PC-9 (cell line): ENCODE measurements at regions of chr6 and their contacts with region 1.

Region 1: DNA sequence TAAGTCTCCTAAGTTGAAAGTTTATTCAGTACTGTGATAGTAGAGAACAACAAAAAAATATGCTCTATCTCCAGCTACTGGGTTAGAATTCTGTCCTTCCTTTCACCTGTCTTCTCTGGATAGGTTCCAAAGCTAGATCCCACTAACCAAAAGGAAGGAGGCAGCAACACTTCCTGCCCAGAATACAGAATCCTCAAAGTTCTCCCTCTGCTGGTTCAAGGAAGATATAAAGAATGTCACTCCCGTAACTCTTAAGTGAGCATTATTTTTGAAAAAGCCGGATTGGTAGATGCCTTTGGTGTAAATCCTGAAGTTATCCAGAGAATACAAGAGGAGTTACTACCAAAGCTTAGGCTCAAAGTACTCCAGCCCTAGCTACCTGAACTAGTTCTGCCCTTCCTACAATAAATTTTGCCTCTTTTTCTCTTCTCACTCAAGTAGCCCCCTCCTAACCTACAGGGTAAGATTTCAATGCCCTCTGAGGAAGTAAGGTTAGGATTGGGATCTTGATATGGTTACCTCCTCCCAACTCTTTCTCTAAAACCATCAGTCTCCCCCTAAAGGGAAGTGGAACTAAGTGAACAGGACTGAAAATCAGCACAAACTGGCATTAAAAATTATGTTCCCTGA is 26.0 kb upstream of the CRIP3 start:
- DNase-seq: peak; percentile 12 to 60
- H3K4me3 ChIP-seq: no peak overlapping the region
- H3K27ac ChIP-seq: no peak overlapping the region
- H3K4me1 ChIP-seq: no peaks in the 10 kb centered on the region
- H3K27me3 ChIP-seq: no peaks in the 10 kb centered on the region
- CTCF ChIP-seq: peak; percentile 74

Region 2: DNA sequence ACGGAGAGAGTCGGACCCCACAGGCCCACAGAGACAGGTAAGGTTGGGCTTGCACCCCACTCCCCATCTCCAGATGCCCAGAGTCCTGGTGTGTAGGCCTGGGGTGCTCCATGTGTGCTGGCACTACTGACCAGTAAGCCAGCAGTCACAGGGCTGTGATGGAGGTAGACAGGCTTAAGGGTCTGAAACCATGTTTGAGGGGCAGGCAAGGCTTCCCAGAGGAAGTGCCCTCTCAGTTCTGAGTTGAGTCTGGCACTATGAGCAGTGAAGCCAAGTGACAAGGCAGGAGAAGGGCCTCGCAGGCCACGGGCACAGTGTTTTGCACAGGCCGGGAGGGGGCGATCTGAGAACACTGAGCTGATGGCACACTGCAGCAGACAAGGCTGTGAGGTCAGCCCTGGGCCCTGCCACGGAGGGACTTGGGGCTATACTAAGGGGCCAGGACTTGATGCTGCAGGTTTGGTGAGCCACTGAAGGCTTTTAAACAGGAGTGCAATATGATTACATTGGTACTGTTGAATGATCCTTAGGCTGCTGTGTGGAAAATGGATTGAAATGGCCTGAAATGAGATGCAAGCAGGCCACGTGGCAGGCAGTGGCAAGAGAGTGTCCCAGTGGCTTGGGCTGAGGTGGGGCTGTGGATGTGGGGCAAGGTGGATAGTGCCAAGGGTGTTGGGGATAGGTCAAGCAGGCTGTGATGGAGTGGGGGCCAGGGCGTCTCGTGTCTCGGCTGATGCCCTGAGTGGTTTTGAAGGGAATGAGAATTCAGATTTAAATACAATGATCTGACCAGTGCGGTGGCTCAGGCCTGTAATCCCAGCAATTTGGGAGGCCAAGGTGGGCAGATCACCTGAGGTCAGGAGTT is 71.0 kb before region 1 on chr6:
- CTCF ChIA-PET with region 1: interaction called, 5 read pairs
- POLR2A ChIA-PET with region 1: no interaction called
- intact Hi-C with region 1: loop called (anchors 1 kb)
- DNase-seq: peak in 1 of 2 experiments; percentile 74
- H3K4me3 ChIP-seq: no peak overlapping the region
- H3K27ac ChIP-seq: no peak overlapping the region
- H3K4me1 ChIP-seq: no peaks in the 10 kb centered on the region
- H3K27me3 ChIP-seq: no peaks in the 10 kb centered on the region
- CTCF ChIP-seq: peak; percentile 83

Region 3: DNA sequence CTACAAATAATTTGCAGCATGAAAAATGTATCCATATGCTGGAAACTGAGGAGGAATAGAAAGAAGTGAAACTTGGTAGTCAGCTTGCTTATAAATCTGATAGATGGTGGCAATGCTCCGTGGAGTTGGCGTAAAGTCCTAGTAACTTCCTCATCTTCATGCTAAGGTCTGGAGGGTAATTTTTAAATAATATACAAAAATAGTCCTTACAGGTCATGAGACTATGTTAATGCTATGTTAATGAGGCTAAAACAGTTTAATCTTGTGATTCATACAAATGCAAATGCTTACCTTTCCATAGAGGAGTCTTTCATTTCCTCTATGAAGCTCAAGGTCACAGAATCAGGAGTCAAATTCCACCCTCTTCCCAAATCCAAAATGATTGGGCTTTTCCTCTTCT is 16.6 kb before region 1 on chr6:
- CTCF ChIA-PET with region 1: no interaction called
- POLR2A ChIA-PET with region 1: no interaction called
- intact Hi-C with region 1: no loop called
- DNase-seq: no peak
- H3K4me3 ChIP-seq: no peak overlapping the region
- H3K27ac ChIP-seq: no peak overlapping the region
- H3K4me1 ChIP-seq: no peaks in the 10 kb centered on the region
- H3K27me3 ChIP-seq: no peaks in the 10 kb centered on the region
- CTCF ChIP-seq: no peak

Region 4: GRCh38 chr6:43347021-43347420 is 12.4 kb after region 1 on chr6:
- CTCF ChIA-PET with region 1: no interaction called
- POLR2A ChIA-PET with region 1: interaction called, 11 read pairs
- intact Hi-C with region 1: no loop called
- DNase-seq: no peak
- H3K4me3 ChIP-seq: no peak overlapping the region
- H3K27ac ChIP-seq: no peak overlapping the region
- H3K4me1 ChIP-seq: no peaks in the 10 kb centered on the region
- H3K27me3 ChIP-seq: no peaks in the 10 kb centered on the region
- CTCF ChIP-seq: no peak

Region 5: DNA sequence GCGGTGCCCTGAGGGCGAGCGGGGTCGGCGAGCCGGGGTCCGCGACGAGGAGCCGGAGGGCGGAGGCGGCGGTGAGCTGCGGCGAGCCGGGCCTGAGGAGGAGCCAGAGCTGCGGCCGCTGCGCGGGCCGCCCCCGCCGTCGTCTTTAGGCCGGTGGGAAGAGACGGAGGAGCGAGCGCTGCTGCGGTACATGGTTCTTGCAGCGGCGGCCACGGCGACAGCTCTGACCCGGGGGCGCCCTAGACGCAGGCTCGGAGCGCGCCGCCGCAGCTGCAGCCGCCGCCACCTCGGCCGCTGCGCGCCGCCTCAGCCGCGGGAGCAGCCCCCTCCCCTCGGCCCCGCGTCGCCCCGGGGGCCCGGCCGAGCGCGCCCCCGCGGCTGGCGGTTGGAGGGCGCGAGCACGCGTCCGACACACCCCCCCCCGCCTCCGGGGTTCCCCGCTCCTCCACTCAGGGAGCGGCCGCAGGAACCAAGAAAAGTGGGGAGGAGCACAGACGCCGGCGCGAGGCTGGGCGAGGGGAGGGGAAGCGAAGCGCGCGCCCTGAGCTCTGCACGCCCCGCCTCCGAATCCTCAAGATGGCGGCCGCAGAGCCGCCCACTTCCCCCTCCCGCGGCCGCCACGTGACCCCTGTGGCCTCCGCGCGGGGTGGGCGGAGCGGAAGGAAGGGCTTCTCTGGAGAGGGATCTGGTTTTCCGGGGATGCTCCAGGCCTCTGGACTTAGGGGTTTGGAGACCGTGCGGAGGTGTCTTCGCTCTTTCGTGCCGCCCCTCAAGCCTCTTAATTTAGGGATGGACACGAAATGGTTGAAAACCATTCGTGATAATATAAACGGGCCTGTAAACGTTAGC is 34.8 kb after region 1 on chr6 and contains the start of gene ZNF318:
- CTCF ChIA-PET with region 1: no interaction called
- POLR2A ChIA-PET with region 1: no interaction called
- intact Hi-C with region 1: no loop called
- DNase-seq: peak; percentile 86 to 96
- H3K4me3 ChIP-seq: peak within 1 kb of the TSS; percentile 71
- H3K27ac ChIP-seq: peak within 1 kb of the TSS; percentile 85
- H3K4me1 ChIP-seq: peaks cover 34% of the 10 kb centered on the region
- H3K27me3 ChIP-seq: no peaks in the 10 kb centered on the region
- CTCF ChIP-seq: no peak
- total RNA-seq, gene ZNF318: 14.9 and 17.1 TPM in 2 replicates